Activated CD4-positive, alpha-beta memory T cell treated with anti-CD3 and anti-CD28 coated beads for 36 hours (primary cell): ENCODE measurements at regions of chr1 and their contacts with region 1.

Region 1: DNA sequence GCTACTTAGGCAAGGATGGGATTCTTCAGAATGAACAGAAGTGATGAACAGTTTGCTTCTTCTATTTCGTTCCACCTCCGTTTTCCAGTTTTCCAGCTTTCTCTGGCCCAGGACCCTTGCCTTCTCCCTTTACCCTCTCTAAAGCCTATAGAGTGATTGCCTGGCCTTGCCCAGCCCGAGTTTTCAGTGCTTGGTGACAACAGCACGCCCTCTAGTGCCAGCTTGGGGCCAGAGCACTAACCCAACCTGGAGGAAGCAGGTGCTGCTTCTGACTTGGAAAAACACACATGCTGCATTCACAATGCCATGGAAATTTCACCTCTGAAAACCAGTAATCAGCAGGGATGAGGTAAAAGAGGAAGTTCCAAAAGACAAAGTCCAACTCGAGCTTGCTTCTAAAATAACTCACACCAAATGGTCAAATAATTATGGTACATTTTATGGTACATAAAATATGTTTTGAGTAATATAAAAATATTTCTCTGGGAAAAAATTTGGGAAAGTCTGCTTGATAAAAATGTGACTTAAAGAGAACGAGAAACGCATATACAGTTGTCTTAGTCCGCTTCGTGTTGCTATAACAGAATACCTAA is 26.1 kb downstream of the UBE2T start:
- DNase-seq: peak; percentile 84
- H3K4me3 Mint-ChIP-seq: no peak overlapping the region
- H3K27ac Mint-ChIP-seq: no peak overlapping the region
- H3K4me1 Mint-ChIP-seq: peaks cover 5% of the 10 kb centered on the region
- H3K27me3 Mint-ChIP-seq: peaks cover 4% of the 10 kb centered on the region

Region 2: DNA sequence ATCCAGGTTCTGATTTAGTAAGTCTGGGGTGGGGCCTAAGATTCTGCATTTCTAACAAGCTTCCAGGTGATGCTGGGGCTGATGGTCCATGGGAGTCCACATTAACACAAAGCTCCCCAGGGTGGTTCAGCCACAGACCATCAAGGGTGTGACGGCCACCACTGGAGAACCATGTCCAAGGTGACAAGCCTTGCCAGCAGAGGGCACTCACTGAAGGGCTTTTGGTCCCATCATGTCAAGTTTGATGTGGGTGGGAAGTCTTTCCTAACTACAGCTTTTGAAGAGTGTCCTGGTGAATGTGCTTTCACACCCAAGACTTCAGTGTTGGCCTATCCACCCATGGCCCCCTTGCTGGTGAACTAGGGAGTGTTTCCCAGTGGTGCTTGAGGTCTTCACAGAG is 41.1 kb before region 1 on chr1:
- CTCF ChIA-PET with region 1: interaction called, 34 read pairs
- POLR2A ChIA-PET with region 1: no interaction called
- intact Hi-C with region 1: loop called (anchors 1 kb)
- DNase-seq: peak; percentile 68
- H3K4me3 Mint-ChIP-seq: no peak overlapping the region
- H3K27ac Mint-ChIP-seq: no peak overlapping the region
- H3K4me1 Mint-ChIP-seq: no peaks in the 10 kb centered on the region
- H3K27me3 Mint-ChIP-seq: peaks cover 3% of the 10 kb centered on the region

Region 3: DNA sequence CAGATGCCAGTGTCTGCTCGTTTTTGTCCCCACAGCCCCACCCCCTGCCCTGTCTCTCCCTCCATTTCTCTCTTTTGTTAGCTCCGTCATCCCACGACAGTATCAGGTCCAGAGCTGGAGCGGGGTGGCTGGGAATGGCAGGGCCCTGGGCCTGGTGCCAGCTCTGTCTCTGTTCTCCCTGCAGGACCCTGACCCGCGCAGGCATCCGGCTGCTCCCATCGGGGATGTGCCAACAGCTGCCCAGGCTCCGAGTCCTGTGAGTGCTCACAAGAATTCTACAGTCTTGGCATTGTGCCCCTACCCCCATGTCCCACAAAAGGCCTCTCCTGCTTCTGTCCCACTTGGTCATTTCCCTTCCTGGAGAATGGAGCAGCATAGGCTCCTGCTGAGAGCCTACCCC is 11.3 kb before region 1 on chr1:
- CTCF ChIA-PET with region 1: interaction called, 14 read pairs
- POLR2A ChIA-PET with region 1: no interaction called
- intact Hi-C with region 1: no loop called
- DNase-seq: no peak
- H3K4me3 Mint-ChIP-seq: no peak overlapping the region
- H3K27ac Mint-ChIP-seq: no peak overlapping the region
- H3K4me1 Mint-ChIP-seq: no peaks in the 10 kb centered on the region
- H3K27me3 Mint-ChIP-seq: no peaks in the 10 kb centered on the region